Adrenal gland (tissue), 19 donors: ENCODE measurements at regions of chr4 and their contacts with region 1.

Region 1: GRCh38 chr4:120922381-120923206 is at the start of gene PRDM5:
- DNase-seq: peak; percentile 54 to 71 (median 63)
- H3K4me3 ChIP-seq: peak within 1 kb of the TSS; percentile 33 to 78 (median 54)
- H3K27ac ChIP-seq: peak within 1 kb of the TSS; percentile 5 to 98 (median 90)
- H3K4me1 ChIP-seq: peaks cover 19 to 27% of the 10 kb centered on the region in 2 donors
- H3K27me3 ChIP-seq: no peaks in the 10 kb centered on the region
- CTCF ChIP-seq: peak in 1 of 6 experiments; percentile 30
- POLR2A ChIP-seq: peak in 1 of 2 donors; percentile 59
- total RNA-seq, gene PRDM5: 7.1 to 26.1 (median 15.5) TPM

Region 2: GRCh38 chr4:120718979-120719566 is 203.5 kb before region 1 on chr4:
- intact Hi-C with region 1: loop called in 1 of 2 experiments (anchors 10 kb)
- DNase-seq: peak in 6 of 7 donors; percentile 14 to 54 (median 36)
- H3K4me3 ChIP-seq: no peak overlapping the region
- H3K27ac ChIP-seq: no peak overlapping the region
- H3K4me1 ChIP-seq: peaks cover 0 to 4% of the 10 kb centered on the region in 2 donors
- H3K27me3 ChIP-seq: no peaks in the 10 kb centered on the region
- CTCF ChIP-seq: peak; percentile 31 to 72 (median 60)
- POLR2A ChIP-seq: no peak

Region 3: DNA sequence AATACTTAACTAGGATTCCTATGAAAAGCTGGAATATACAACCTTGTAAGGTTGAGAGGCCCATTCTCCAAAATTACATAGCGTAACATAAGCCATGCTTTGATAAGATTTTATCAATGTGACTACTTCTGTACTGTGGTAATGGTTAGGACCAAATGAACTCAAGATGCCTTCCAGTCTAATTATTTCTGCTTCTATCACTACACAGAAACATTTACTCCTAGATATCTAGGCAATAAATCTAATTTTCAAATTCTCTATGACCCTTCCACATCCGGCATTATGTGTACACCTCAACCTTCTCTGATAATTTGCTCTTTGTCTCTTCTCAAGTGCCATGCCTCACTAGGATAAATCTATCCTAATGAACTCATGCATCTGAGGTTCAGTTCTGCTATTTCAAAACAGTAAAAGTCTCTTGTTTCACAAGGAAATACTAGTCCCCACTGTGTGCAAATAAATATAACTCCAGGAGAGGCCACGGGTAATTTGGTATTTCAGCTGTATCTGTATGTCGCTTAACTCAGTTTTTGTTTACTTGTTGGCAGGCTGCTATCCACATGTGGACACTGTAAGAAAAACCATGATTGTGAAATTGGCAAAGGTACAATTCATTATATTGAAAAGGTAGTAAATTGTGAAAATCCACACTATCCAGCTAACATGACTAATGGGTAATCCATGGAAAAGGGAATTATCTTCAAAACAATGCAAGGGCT is 93.3 kb before region 1 on chr4:
- intact Hi-C with region 1: no loop called
- DNase-seq: no peak
- H3K4me3 ChIP-seq: no peak overlapping the region
- H3K27ac ChIP-seq: no peak overlapping the region
- H3K4me1 ChIP-seq: peaks cover 3 to 21% of the 10 kb centered on the region in 2 donors
- H3K27me3 ChIP-seq: no peaks in the 10 kb centered on the region
- CTCF ChIP-seq: no peak
- POLR2A ChIP-seq: no peak